ENCODE measurements at regions of chr18 and their contacts with region 1.

Region 1: GRCh38 chr18:42053188-42053781 is 98.3 kb downstream of the PIK3C3 start:
- DNase-seq: no peak
- ATAC-seq: peak; percentile 50
- H3K4me3 Mint-ChIP-seq: no peak overlapping the region
- H3K27ac Mint-ChIP-seq: no peak overlapping the region
- H3K4me1 Mint-ChIP-seq: peaks cover 8% of the 10 kb centered on the region
- H3K27me3 Mint-ChIP-seq: no peaks in the 10 kb centered on the region
- CTCF ChIP-seq: peak; percentile 42

Region 2: DNA sequence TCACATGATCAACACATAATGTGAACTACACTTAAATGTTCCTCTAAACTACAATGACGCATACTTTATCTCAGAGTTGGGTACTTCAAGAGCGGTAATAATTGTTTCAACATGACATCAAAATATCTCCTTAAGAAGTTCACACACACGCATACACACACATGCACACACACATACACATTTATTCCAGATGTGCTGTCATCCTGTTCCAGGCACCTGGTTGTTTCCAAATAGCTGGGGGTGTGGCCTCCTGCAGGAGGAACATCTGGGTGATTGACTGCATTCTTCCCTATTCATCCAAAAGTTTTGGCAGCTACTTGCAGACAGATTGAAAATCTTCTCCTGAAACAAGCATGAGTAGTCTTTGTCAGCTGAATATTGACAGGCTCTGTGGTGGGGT is 136.1 kb before region 1 on chr18:
- CTCF ChIA-PET with region 1: no interaction called
- POLR2A ChIA-PET with region 1: no interaction called
- intact Hi-C with region 1: no loop called
- DNase-seq: no peak
- ATAC-seq: no peak
- H3K4me3 Mint-ChIP-seq: no peak overlapping the region
- H3K27ac Mint-ChIP-seq: no peak overlapping the region
- H3K4me1 Mint-ChIP-seq: no peaks in the 10 kb centered on the region
- H3K27me3 Mint-ChIP-seq: peaks cover 18% of the 10 kb centered on the region
- CTCF ChIP-seq: no peak

Region 3: GRCh38 chr18:42068030-42068429 is 14.7 kb after region 1 on chr18:
- CTCF ChIA-PET with region 1: interaction called, 30 read pairs
- POLR2A ChIA-PET with region 1: no interaction called
- intact Hi-C with region 1: no loop called
- DNase-seq: no peak
- ATAC-seq: no peak
- H3K4me3 Mint-ChIP-seq: no peak overlapping the region
- H3K27ac Mint-ChIP-seq: no peak overlapping the region
- H3K4me1 Mint-ChIP-seq: no peaks in the 10 kb centered on the region
- H3K27me3 Mint-ChIP-seq: no peaks in the 10 kb centered on the region
- CTCF ChIP-seq: no peak

Region 4: GRCh38 chr18:42274488-42275137 is 221.3 kb after region 1 on chr18:
- CTCF ChIA-PET with region 1: interaction called, 5 read pairs
- POLR2A ChIA-PET with region 1: no interaction called
- intact Hi-C with region 1: loop called (anchors 1 kb)
- DNase-seq: no peak
- ATAC-seq: no peak
- H3K4me3 Mint-ChIP-seq: no peak overlapping the region
- H3K27ac Mint-ChIP-seq: no peak overlapping the region
- H3K4me1 Mint-ChIP-seq: no peaks in the 10 kb centered on the region
- H3K27me3 Mint-ChIP-seq: no peaks in the 10 kb centered on the region
- CTCF ChIP-seq: no peak

Region 5: DNA sequence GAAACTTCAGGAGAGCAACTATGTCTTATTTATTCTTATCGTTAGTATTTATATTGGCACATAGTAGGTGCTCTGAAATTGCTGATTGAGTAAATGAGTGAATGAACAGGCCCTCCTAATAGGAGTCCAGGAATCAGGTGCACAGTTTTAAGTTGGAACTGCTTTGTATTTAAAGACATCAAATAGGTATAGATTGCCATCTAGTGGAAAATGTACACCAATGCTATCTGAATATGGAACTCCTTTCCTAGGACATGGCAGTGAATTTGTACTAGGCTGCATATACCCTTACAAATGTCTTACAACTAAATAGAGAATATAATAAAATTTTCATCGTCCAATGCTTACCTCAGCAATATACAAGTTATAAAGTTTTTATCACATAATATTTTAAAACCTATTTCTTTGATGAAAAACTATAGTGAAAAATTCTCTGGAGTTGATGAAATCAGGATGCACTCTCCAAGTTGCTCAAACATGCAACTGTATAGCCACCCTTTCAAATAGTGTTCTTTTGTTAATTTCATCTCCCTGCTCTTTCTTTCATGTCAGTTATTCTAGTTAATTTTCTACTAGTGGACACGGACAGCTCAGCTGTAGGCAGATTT is 1542.9 kb after region 1 on chr18:
- CTCF ChIA-PET with region 1: no interaction called
- POLR2A ChIA-PET with region 1: no interaction called
- intact Hi-C with region 1: loop called (anchors 5 kb)
- DNase-seq: no peak
- ATAC-seq: no peak
- H3K4me3 Mint-ChIP-seq: no peak overlapping the region
- H3K27ac Mint-ChIP-seq: no peak overlapping the region
- H3K4me1 Mint-ChIP-seq: no peaks in the 10 kb centered on the region
- H3K27me3 Mint-ChIP-seq: no peaks in the 10 kb centered on the region
- CTCF ChIP-seq: no peak

Measured in activated B cell treated with CpG ODN at 0.5 μM for 24 hours (primary cell).